Common myeloid progenitor, CD34-positive (primary cell): ENCODE measurements at regions of chr5 and their contacts with region 1.

Region 1: DNA sequence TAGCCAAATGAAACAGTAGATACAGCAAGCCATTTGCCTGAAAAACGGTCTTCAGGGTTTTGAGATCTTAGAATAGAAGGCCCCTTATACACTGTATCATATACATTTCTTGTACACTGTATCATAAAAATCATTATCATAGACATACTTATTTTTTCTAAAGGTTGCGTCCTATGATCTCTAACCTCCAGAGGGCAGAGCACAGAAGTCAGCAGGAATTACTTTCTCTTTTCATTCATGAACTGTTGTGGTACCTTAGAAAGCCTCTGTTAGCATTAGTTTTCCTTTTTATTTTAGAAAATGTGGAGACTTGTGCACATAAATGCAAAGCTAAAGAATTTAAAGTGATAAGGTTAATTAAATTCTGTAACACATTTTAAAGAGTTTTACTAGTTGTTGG is 115.4 kb downstream of the OXCT1 start:
- DNase-seq: peak; percentile 38 to 70 (median 66)
- H3K4me3 ChIP-seq: peak overlapping the region in 2 of 7 experiments; percentile 38 to 54
- H3K27ac ChIP-seq: no peak overlapping the region
- H3K4me1 ChIP-seq: peaks cover 0 to 13% (median 0%) of the 10 kb centered on the region in 4 experiments
- H3K27me3 ChIP-seq: no peaks in the 10 kb centered on the region

Region 2: DNA sequence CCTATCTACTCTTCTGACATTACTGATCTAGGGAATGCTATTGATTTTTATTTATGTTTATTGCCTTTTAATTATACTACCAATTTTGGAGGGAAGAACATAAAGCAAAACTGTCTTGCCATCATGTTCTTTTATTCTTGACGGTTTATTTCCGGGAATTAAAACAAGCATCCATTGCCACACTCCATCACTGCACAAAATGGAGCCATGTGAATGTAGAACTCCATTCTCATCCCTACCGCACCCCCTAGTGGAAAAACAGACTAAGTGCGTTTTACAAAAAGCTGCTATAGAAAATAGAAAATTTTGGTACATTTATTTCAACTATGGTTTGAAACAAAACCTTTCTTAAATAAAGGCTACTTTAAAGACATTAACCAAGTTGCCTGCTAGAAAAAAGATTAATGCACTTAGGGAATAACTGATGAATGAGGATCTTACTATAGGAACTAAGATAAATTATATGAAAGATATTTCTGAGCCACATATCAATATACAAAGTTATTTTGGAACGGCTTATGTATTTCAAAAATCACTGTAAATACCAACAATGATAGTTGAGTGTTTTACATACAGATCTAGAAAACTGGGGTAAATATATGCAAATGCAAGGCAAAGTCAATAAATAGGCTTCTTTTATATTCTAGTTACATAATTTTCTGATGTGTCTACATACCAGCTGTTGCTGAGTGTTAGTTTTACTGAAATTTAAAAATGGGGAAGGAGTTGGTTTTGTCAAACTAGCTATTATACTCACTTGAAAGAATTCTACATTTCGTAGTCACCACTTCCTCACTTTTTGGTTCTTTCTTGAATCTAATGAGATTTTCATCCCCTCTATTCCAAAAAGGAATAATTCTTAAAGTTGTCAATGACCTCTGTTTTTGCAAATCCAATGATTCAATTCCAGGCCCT is 88.9 kb after region 1 on chr5:
- CTCF ChIA-PET with region 1: interaction called, 36 read pairs
- POLR2A ChIA-PET with region 1: no interaction called
- DNase-seq: peak; percentile 60 to 78 (median 74)
- H3K4me3 ChIP-seq: no peak overlapping the region
- H3K27ac ChIP-seq: no peak overlapping the region
- H3K4me1 ChIP-seq: no peaks in the 10 kb centered on the region
- H3K27me3 ChIP-seq: no peaks in the 10 kb centered on the region

Region 3: DNA sequence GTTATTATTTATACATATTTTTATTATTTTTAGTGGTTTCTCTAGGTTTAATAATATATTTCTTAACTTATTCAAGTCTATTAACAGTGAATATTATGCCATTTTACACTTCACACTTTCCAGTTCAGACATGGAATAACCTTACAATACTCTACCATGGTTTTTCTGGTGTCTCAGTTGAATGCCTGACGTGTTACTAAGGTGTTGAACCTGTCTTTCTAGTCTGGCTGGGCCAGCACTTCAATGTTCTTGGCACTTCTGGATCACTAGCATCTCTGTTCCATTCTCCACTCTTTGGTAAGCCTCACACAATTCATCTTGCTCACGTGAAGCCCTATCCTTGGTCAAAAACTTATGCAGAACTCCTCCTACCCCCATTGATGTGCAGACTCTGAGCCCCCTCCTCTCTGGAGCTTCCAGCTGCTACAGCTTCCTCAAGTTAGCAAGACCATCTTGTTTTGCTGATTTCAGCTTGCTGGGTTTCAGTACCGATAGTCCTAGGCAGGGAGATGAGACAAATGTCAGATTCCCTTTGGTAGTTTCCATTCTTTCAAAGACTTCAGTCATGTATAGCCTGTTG is 413.3 kb after region 1 on chr5:
- CTCF ChIA-PET with region 1: no interaction called
- POLR2A ChIA-PET with region 1: no interaction called
- DNase-seq: no peak
- H3K4me3 ChIP-seq: no peak overlapping the region
- H3K27ac ChIP-seq: no peak overlapping the region
- H3K4me1 ChIP-seq: no peaks in the 10 kb centered on the region
- H3K27me3 ChIP-seq: no peaks in the 10 kb centered on the region